ENCODE measurements at regions of chr9 and their contacts with region 1.

Region 1: DNA sequence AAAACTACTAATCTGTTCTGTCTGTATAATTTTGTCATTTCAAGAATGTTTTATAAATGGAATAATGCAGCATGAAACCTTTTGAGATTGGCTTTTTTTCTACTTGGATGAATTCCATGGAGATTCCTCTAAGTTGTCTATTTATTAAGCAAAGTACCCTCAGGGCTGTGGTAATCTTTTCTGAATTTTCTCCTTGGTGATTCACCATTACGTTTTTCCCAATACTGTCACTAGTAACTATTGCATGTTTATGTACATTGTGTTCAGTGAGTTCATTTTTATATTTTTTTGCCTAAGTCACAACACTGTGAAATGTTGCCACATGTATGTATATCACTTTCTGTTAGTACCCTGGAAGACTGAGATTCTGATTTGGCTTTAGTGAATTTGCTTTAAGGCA is 177.0 kb upstream of the GRIN3A start:
- DNase-seq: no peak
- H3K4me3 ChIP-seq: no peak overlapping the region
- H3K27ac ChIP-seq: no peak overlapping the region
- H3K4me1 ChIP-seq: no peaks in the 10 kb centered on the region
- H3K27me3 ChIP-seq: no peaks in the 10 kb centered on the region
- CTCF ChIP-seq: no peak

Region 2: DNA sequence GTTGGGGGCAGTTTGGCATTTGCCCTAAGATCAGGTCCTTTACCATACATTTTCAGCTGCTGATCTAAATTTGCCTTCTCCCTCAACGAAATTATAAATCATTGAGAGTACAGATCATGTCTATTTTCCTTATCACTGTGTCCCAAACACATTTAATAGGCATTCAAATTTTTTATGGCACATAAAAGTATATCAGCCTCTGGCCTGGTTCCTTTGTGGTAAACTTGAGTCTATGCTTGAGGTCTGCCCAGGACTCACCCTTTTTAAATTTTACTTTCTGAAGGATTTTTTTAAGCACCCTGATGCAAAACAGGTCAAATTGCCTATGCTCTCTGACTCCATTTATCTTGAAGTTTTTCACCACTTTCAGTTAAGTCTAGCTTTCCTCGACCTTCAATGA is 13.4 kb before region 1 on chr9:
- CTCF ChIA-PET with region 1: no interaction called
- POLR2A ChIA-PET with region 1: no interaction called
- intact Hi-C with region 1: loop called (anchors 1 kb)
- DNase-seq: no peak
- H3K4me3 ChIP-seq: no peak overlapping the region
- H3K27ac ChIP-seq: no peak overlapping the region
- H3K4me1 ChIP-seq: no peaks in the 10 kb centered on the region
- H3K27me3 ChIP-seq: no peaks in the 10 kb centered on the region
- CTCF ChIP-seq: no peak

Region 3: DNA sequence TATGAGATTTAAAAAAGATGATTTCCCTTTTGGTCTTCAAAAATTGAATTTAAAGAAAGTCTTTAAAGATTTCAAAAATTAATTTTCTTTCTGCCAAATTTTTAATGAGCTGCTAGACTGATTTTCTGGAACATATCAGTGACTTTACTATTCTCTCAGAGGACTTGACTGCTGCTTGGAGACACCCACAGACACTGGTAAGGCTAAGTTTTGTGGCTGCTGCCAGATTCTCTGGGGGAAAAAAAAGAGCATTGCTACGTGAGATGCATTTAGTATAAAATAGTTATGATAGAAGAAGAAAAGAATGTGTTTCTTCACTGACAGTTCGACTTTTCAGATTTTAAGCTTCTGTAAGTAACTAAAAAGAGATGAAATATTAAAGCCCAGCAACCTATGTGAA is 16.3 kb after region 1 on chr9:
- CTCF ChIA-PET with region 1: no interaction called
- POLR2A ChIA-PET with region 1: no interaction called
- intact Hi-C with region 1: no loop called
- DNase-seq: no peak
- H3K4me3 ChIP-seq: no peak overlapping the region
- H3K27ac ChIP-seq: no peak overlapping the region
- H3K4me1 ChIP-seq: no peaks in the 10 kb centered on the region
- H3K27me3 ChIP-seq: no peaks in the 10 kb centered on the region
- CTCF ChIP-seq: no peak

Region 4: GRCh38 chr9:102405218-102405867 is 489.9 kb after region 1 on chr9:
- CTCF ChIA-PET with region 1: no interaction called
- POLR2A ChIA-PET with region 1: no interaction called
- intact Hi-C with region 1: no loop called
- DNase-seq: no peak
- H3K4me3 ChIP-seq: no peak overlapping the region
- H3K27ac ChIP-seq: no peak overlapping the region
- H3K4me1 ChIP-seq: no peaks in the 10 kb centered on the region
- H3K27me3 ChIP-seq: no peaks in the 10 kb centered on the region
- CTCF ChIP-seq: no peak

Measured in PC-9 (cell line).